K562 (cell line): ENCODE measurements at regions of chr7 and their contacts with region 1.

Region 1: GRCh38 chr7:158847451-158847866 is 8.9 kb upstream of the DYNC2I1 start:
- DNase-seq: no peak
- ATAC-seq: peak; percentile 45
- H3K4me3 ChIP-seq: no peak overlapping the region
- H3K27ac ChIP-seq: no peak overlapping the region
- H3K4me1 ChIP-seq: peaks cover 0 to 7% of the 10 kb centered on the region in 2 experiments; a peak in 2 of 5 replicates
- H3K27me3 ChIP-seq: no peaks in the 10 kb centered on the region
- CTCF ChIP-seq: no peak
- EP300 ChIP-seq: no peak
- POLR2A ChIP-seq: no peak
- RAD21 ChIP-seq: no peak

Region 2: GRCh38 chr7:158863611-158864506 is 16.4 kb after region 1 on chr7:
- CTCF ChIA-PET with region 1: no interaction called
- POLR2A ChIA-PET with region 1: interaction called, 14 read pairs
- in situ Hi-C with region 1: no loop called
- intact Hi-C with region 1: no loop called
- DNase-seq: peak; percentile 94 to 98 (median 96)
- ATAC-seq: peak; percentile 80
- H3K4me3 ChIP-seq: peak overlapping the region; percentile 29
- H3K27ac ChIP-seq: peak overlapping the region; percentile 97
- H3K4me1 ChIP-seq: peaks cover 58 to 64% of the 10 kb centered on the region in 2 experiments
- H3K27me3 ChIP-seq: no peaks in the 10 kb centered on the region
- CTCF ChIP-seq: no peak
- EP300 ChIP-seq: peak; percentile 80
- POLR2A ChIP-seq: peak; percentile 78
- RAD21 ChIP-seq: no peak; a peak in 3 of 4 replicates